Tibial artery (tissue), 4 donors: ENCODE measurements at regions of chr10 and their contacts with region 1.

Region 1: GRCh38 chr10:76397181-76397881 is 965.9 kb downstream of the LRMDA start:
- DNase-seq: peak; percentile 82 to 94
- H3K4me3 ChIP-seq: peak overlapping the region in 1 of 2 donors; percentile 27
- H3K27ac ChIP-seq: peak overlapping the region; percentile 87 to 88
- H3K4me1 ChIP-seq: peaks cover 0 to 71% (median 45%) of the 10 kb centered on the region in 4 donors
- H3K27me3 ChIP-seq: no peaks in the 10 kb centered on the region
- CTCF ChIP-seq: peak; percentile 19 to 42

Region 2: DNA sequence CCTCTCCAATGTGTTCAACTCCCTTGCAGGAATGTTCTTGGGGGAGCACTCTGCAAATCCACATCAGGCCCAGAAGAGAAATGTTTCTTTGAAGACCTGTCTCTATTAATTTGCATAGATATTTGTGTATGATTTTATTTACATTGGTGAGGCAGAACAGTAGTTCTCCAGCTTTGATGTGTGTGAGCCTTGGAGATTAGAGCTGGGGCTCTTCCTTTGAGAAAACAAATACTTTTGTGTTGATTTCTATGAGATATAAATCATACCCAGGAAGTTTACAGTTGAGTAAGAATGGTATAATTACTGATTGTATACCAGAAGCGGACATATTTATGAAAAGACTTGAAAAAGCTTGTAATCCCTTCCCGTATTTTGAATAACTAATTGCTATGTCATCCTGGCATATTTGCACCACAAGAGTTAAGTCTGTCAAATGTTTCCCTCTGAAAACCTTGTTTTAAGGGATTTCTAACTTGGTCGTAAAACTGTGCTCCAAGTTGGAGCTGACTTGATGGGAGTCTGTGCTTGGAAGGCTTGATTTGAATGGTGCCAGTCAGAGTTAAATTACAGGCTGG is 497.4 kb before region 1 on chr10:
- intact Hi-C with region 1: no loop called
- DNase-seq: no peak
- H3K4me3 ChIP-seq: no peak overlapping the region
- H3K27ac ChIP-seq: no peak overlapping the region
- H3K4me1 ChIP-seq: no peaks in the 10 kb centered on the region
- H3K27me3 ChIP-seq: no peaks in the 10 kb centered on the region
- CTCF ChIP-seq: no peak

Region 3: GRCh38 chr10:76311752-76312636 is 85.3 kb before region 1 on chr10:
- intact Hi-C with region 1: loop called (anchors 10 kb)
- DNase-seq: peak; percentile 37 to 72
- H3K4me3 ChIP-seq: no peak overlapping the region
- H3K27ac ChIP-seq: peak overlapping the region; percentile 49 to 73
- H3K4me1 ChIP-seq: peaks cover 0 to 59% (median 37%) of the 10 kb centered on the region in 4 donors
- H3K27me3 ChIP-seq: no peaks in the 10 kb centered on the region
- CTCF ChIP-seq: peak in 1 of 2 experiments; percentile 21

Region 4: GRCh38 chr10:76454506-76455140 is 57.3 kb after region 1 on chr10:
- intact Hi-C with region 1: loop called (anchors 5 kb)
- DNase-seq: peak in 1 of 2 donors; percentile 32
- H3K4me3 ChIP-seq: no peak overlapping the region
- H3K27ac ChIP-seq: peak overlapping the region; percentile 62 to 84
- H3K4me1 ChIP-seq: peaks cover 0 to 60% (median 20%) of the 10 kb centered on the region in 4 donors
- H3K27me3 ChIP-seq: no peaks in the 10 kb centered on the region
- CTCF ChIP-seq: no peak